Right cardiac atrium (tissue), 5 donors: ENCODE measurements at regions of chr1 and their contacts with region 1.

Region 1: DNA sequence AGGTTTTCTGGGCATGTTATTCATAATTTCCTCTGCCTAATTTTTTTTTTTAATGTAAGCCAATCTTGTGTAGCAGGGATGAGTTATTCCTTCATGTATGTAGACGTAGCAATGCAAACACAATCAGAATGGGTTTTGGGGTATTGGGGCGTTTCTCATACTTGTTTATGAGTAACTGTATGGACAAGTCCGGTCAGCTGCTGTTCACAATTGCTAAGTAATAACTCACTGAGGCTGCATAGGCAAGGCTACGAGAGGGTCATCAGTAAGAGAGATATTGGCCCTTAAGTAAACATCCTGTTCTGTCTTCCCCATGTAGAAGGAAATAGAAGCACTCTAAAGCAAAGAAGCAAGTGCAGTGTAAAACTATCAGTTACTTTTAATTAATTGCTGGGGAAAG is 9.5 kb upstream of the TARS2 start:
- DNase-seq: no peak
- ATAC-seq: no peak
- H3K4me3 ChIP-seq: no peak overlapping the region
- H3K27ac ChIP-seq: no peak overlapping the region
- H3K4me1 ChIP-seq: peaks cover 6% of the 10 kb centered on the region
- H3K27me3 ChIP-seq: no peaks in the 10 kb centered on the region

Region 2: DNA sequence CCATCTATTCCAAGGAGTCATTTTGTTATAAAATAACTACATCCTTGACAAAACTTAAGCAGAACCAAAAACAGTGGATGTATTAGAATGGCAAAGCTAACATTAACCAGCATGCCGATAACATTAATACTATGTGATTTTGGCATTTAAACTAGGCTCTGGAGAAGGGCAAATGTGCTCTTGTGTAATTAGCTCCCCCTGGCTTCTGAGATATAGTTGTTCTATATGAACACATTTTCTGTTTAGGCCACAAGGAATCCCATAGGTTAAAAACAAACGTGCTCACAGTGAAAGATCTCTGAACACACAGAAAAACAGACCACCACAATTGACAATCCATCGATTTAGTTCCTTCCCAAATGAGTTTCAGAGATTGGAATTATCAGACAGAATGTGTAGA is 47.9 kb before region 1 on chr1:
- intact Hi-C with region 1: no loop called
- DNase-seq: no peak
- ATAC-seq: no peak
- H3K4me3 ChIP-seq: no peak overlapping the region
- H3K27ac ChIP-seq: no peak overlapping the region
- H3K4me1 ChIP-seq: peaks cover 1% of the 10 kb centered on the region
- H3K27me3 ChIP-seq: no peaks in the 10 kb centered on the region

Region 3: GRCh38 chr1:150532868-150533302 is 55.2 kb after region 1 on chr1:
- intact Hi-C with region 1: loop called in 2 of 4 experiments (anchors 5 to 10 kb)
- DNase-seq: peak in 2 of 3 donors; percentile 63 to 78
- ATAC-seq: peak; percentile 11 to 21
- H3K4me3 ChIP-seq: no peak overlapping the region
- H3K27ac ChIP-seq: peak overlapping the region; percentile 72
- H3K4me1 ChIP-seq: peaks cover 3% of the 10 kb centered on the region
- H3K27me3 ChIP-seq: no peaks in the 10 kb centered on the region

Region 4: DNA sequence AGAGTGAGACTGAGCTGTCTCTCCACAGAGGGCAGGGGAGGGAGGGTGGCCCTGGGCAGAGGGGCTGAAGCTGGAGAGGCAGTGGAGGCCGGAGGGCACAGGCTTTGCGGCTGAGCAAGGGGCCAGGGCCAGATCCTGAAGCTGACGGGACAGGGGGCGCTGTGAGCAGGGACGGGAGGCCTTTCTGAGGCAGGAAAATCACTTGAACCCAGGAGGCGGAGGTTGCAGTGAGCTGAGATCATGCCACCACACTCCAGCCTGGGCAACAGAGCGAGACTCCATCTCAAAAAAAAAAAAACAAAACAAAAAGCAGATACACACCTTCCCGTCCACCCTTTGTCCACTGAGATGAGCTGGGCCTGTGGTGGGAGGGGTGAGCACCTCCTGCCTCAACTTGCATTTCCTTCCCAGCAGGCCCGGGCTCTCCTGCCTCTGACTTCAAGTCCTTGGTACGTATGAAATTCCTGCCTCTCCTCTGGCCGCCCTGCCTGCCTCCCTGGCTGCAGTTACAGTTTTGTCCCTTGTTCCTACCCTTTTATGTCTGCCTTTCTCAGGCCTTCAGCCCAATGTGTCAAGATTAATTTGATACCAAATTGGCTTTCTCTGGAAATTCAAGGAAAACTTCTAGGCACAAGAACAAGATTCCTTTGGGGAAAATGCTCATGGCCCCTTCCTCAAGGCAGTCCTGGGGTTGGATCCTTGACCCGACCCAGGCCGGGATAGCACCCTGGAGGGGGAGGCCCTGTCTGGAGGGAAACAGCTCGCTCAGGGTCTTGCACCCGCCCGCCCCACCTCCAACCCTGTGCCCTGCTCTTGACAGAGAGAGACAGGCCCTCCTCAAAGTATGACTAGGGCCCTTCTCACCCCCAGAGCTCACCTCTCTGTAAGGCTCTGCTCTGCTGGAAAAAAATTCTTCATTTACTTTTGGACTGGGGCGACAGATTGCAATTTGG is 60.3 kb after region 1 on chr1:
- intact Hi-C with region 1: loop called in 2 of 4 experiments (anchors 5 to 10 kb)
- DNase-seq: peak; percentile 71 to 76 (median 74)
- ATAC-seq: peak; percentile 28 to 44
- H3K4me3 ChIP-seq: no peak overlapping the region
- H3K27ac ChIP-seq: peak overlapping the region; percentile 48
- H3K4me1 ChIP-seq: no peaks in the 10 kb centered on the region
- H3K27me3 ChIP-seq: no peaks in the 10 kb centered on the region